Ascending aorta (tissue), 2 donors: ENCODE measurements at regions of chr1 and their contacts with region 1.

Region 1: DNA sequence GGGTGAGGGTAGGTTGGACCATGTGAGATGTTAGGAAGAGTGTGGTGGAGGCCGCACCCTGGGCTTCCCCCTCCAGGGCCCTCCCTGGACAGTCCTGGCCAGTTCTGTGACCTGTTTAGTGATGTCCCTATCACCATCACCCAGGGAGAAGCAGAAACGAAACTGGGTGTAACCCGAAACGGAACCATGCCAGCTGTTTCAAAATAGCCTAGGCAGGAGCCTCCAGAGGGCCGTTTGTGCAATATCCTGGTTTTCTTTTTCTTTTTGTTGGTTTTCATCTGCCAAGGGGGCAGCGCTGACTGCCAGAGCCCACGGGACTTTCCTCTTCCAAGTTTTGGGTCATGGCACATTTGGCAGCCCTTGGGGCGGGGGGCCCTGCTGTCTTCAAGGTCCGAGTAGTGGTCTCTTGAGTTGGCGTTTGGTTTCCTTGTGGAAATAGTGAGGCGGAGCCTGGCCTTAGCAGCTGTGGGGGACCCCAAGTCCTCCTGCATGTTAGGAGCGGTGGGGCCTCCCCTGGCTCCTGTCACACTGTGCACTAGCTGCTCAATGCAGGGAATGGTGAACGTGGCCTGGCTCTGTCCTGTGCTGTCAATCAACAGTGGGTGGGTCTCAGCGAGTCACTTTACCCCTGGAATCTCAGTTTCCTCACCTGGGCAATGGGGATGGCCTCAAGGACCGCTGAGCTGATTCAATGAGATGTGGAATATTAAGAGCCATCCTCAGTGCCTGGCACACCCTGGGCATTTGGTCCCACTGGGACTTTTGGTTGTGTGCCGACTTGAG is 90.7 kb downstream of the ARHGEF10L start:
- DNase-seq: peak; percentile 69 to 93
- H3K4me3 ChIP-seq: peak overlapping the region in 1 of 2 donors; percentile 28
- H3K27ac ChIP-seq: peak overlapping the region; percentile 91 to 97
- H3K4me1 ChIP-seq: peaks cover 23 to 68% of the 10 kb centered on the region in 2 donors
- H3K27me3 ChIP-seq: no peaks in the 10 kb centered on the region
- CTCF ChIP-seq: no peak

Region 2: GRCh38 chr1:17053685-17054410 is 576.4 kb before region 1 on chr1 and contains the start of gene SDHB:
- intact Hi-C with region 1: loop called (anchors 10 kb)
- DNase-seq: peak; percentile 93 to 99
- H3K4me3 ChIP-seq: peak within 1 kb of the TSS; percentile 82 to 91
- H3K27ac ChIP-seq: peak within 1 kb of the TSS; percentile 73 to 84
- H3K4me1 ChIP-seq: peaks cover 4 to 17% of the 10 kb centered on the region in 2 donors
- H3K27me3 ChIP-seq: no peaks in the 10 kb centered on the region
- CTCF ChIP-seq: no peak
- total RNA-seq, gene SDHB: 112 TPM

Region 3: GRCh38 chr1:17551755-17552234 is 78.4 kb before region 1 on chr1:
- intact Hi-C with region 1: loop called (anchors 5 kb)
- DNase-seq: peak in 1 of 2 donors; percentile 91
- H3K4me3 ChIP-seq: peak overlapping the region in 1 of 2 donors; percentile 32
- H3K27ac ChIP-seq: peak overlapping the region; percentile 95 to 98
- H3K4me1 ChIP-seq: peaks cover 47 to 87% of the 10 kb centered on the region in 2 donors
- H3K27me3 ChIP-seq: no peaks in the 10 kb centered on the region
- CTCF ChIP-seq: no peak

Region 4: DNA sequence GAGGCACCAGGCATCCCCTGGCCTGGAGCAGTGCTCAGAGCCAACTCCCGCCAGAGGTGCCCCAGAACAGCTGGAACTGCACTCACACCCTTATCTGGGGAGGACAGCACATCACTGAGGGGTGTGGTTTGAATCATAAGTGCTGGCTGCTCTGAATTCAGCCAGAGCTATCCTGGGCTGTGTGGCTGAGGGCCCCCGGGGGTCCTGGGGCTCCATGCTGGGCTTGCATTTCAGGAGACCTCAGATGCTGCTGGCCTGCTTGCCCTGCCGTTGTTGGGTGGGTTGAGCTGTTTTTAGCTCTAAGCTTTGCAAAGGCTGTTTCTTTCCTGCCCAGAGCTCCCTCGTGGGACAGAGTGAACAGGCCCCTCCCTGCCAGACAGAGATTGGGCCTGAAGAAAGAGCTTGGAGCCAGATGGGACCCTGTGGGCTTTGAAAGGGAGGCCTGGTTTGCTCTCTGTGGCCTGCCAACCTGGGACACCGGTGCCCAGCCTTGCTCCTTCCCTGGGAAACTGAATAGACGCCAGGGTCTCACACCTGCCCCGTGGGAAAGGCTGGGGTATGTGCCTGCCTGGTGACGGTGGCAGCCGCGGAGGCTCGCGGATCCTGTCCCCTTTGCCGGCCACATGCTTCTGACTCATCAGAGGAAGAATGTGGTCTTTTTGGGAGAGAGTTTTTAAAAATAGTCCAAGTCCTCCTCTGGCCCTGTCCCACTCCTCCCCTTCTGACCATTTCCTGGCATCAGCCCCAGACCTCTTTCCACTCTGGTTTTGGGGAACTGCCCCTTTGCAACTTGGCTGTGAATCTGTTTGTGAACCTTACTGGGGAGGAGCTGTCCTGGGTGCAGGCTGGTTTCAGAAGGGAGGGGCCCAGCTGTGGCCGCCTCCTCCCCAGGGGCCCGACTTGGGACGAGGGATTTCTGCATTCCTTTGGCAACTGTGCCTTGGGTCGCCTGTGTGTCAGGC is 60.8 kb before region 1 on chr1:
- intact Hi-C with region 1: loop called (anchors 5 kb)
- DNase-seq: peak; percentile 86 to 97
- H3K4me3 ChIP-seq: peak overlapping the region in 1 of 2 donors; percentile 22
- H3K27ac ChIP-seq: peak overlapping the region; percentile 95 to 98
- H3K4me1 ChIP-seq: peaks cover 46 to 83% of the 10 kb centered on the region in 2 donors
- H3K27me3 ChIP-seq: no peaks in the 10 kb centered on the region
- CTCF ChIP-seq: no peak

Region 5: DNA sequence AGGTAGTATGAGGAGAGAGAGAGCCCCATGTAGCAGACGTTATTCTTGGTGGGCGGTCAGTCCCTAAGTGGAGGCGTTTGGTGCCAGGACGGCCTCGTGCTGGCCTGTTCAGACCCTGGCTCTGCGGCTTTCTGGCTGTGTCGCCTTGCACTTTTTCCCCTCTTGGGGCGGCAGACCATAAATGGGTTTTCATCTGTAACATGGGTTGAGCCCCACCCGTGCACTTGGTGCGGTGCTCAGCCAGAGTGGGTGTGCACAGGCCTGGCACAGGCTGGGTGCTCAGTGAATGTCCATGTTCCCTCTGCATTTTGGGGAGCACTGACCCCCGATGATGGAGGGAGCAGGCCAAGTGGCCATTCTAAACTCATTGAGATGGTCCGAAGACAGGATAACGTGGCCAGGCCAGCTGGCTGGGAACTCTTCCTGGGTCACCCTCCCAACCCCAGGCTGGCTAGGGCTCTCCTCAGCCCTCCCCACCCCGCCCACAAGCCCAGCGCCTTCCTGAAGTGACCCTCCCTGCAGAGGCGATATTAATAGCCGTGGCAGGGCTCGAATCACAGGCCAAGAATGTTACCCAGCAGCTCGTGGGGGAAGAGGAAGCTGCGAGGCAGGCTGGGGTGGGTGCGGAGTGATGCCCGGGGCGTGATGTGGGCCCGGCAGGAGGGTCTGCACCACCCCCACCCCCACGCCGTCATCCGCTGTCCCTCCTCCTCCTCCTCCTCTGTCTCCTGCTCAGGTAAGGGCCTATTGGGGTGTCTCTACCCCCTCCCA is 12.3 kb before region 1 on chr1:
- intact Hi-C with region 1: loop called (anchors 2 kb)
- DNase-seq: peak; percentile 71 to 94
- H3K4me3 ChIP-seq: peak overlapping the region; percentile 50 to 68
- H3K27ac ChIP-seq: peak overlapping the region; percentile 91 to 97
- H3K4me1 ChIP-seq: peaks cover 35 to 62% of the 10 kb centered on the region in 2 donors
- H3K27me3 ChIP-seq: no peaks in the 10 kb centered on the region
- CTCF ChIP-seq: peak in 1 of 3 experiments; percentile 27

Region 6: GRCh38 chr1:17671741-17672140 is 41.5 kb after region 1 on chr1:
- intact Hi-C with region 1: no loop called
- DNase-seq: no peak
- H3K4me3 ChIP-seq: no peak overlapping the region
- H3K27ac ChIP-seq: peak overlapping the region in 1 of 2 donors; percentile 40
- H3K4me1 ChIP-seq: peaks cover 0 to 40% of the 10 kb centered on the region in 2 donors
- H3K27me3 ChIP-seq: no peaks in the 10 kb centered on the region
- CTCF ChIP-seq: no peak

Region 7: GRCh38 chr1:17744666-17745478 is 114.6 kb after region 1 on chr1:
- intact Hi-C with region 1: no loop called
- DNase-seq: no peak
- H3K4me3 ChIP-seq: no peak overlapping the region
- H3K27ac ChIP-seq: no peak overlapping the region
- H3K4me1 ChIP-seq: no peaks in the 10 kb centered on the region
- H3K27me3 ChIP-seq: no peaks in the 10 kb centered on the region
- CTCF ChIP-seq: no peak